Calu3 (cell line): ENCODE measurements at regions of chr2 and their contacts with region 1.

Region 1: DNA sequence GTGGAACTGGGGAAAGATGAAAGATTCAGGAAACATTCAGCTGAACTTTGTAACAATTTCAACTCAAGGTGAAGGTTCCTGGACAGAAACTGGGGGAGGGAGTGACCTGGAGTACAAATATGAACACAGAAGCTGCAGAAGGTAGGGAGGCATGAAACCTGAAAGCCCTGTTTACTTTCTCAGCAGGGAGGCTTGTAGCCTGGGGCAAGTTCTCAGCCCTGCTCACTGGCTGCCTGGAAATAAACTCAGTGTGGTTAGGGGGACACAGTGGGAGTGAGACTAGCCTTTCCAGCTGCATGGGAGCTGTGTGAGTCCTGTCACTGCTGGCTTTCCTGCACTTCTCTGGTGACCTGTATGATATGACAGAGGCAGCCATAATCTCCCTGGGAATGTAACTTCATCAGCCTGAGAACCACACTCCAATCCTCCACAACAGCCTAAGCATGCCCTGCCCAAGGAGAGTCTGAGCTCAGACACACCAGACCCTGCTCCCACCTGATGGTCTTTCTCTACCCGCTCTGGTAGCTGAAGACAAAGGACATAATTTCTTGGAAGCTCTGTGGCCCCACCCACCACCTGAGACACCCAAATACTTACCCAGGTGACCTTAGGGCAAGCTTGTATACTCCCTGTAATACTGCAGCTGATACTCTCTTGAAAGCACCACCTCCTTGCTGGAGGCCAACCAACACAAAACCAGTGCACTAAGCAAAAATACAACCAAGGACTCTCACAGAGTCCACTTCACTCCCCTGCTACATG is 76.9 kb downstream of the ZSWIM2 start:
- DNase-seq: peak; percentile 56
- H3K4me3 Mint-ChIP-seq: peak overlapping the region; percentile 31
- H3K27ac Mint-ChIP-seq: peak overlapping the region; percentile 63
- H3K4me1 Mint-ChIP-seq: peaks cover 33% of the 10 kb centered on the region
- H3K27me3 Mint-ChIP-seq: no peaks in the 10 kb centered on the region
- CTCF ChIP-seq: no peak

Region 2: DNA sequence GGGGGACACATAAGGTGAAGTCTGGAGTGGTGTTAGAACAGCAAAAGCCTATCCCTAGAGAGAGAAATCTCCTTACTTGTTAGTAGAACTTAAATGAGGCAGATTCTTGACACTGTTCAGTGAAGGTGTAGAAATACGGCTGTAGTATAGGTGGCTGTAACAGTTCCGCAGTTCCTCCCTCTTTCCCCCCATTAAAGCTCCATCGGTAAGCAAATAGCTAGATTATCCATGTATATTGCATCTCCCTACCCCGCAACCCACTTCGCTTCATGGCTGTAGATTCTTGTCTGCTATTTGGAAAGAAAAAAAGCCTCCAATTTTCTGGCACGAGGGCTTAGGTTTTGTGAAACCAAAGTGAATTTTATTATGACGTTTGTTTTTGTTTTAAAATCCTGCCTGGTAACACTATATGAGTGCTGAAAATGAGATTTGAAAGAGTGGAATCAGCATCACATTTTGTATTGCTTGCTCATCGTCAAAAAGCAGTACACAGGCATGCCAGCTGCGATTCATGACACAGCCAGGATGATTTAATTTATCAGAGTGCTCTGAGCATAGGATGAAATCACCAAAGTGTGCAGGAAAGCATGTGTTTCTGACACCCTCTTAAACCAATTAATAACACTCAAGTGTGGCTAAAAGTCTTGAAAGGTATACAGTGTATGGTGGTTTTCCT is 76.8 kb before region 1 on chr2:
- CTCF ChIA-PET with region 1: no interaction called
- intact Hi-C with region 1: loop called (anchors 5 kb)
- DNase-seq: no peak
- H3K4me3 Mint-ChIP-seq: peak overlapping the region; percentile 82
- H3K27ac Mint-ChIP-seq: peak overlapping the region; percentile 49
- H3K4me1 Mint-ChIP-seq: peaks cover 36% of the 10 kb centered on the region
- H3K27me3 Mint-ChIP-seq: no peaks in the 10 kb centered on the region
- CTCF ChIP-seq: no peak

Region 3: GRCh38 chr2:186751790-186752189 is 20.2 kb before region 1 on chr2:
- CTCF ChIA-PET with region 1: interaction called, 4 read pairs
- intact Hi-C with region 1: loop called (anchors 1 kb)
- DNase-seq: no peak
- H3K4me3 Mint-ChIP-seq: no peak overlapping the region
- H3K27ac Mint-ChIP-seq: peak overlapping the region; percentile 54
- H3K4me1 Mint-ChIP-seq: peaks cover 38% of the 10 kb centered on the region
- H3K27me3 Mint-ChIP-seq: no peaks in the 10 kb centered on the region
- CTCF ChIP-seq: no peak

Region 4: DNA sequence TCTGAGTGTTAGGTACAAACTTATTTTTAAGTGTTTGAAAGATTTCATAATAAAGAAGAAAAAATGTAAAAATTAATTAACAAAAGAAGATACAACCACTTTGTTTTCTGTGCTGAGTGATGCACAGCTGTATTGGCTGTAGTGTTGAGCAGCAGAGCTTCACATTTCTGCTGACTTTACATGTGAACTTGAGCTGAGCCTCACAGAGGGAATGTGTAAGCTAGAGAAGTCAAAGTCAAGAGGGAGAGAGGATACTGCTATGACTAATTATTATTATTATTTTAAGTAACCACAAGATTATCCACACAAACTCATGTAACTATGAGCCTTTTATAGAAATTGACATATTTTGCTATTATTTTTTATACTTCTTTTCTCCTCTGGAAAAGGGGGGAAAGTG is 236.1 kb after region 1 on chr2:
- CTCF ChIA-PET with region 1: no interaction called
- intact Hi-C with region 1: no loop called
- DNase-seq: no peak
- H3K4me3 Mint-ChIP-seq: no peak overlapping the region
- H3K27ac Mint-ChIP-seq: no peak overlapping the region
- H3K4me1 Mint-ChIP-seq: peaks cover 8% of the 10 kb centered on the region
- H3K27me3 Mint-ChIP-seq: no peaks in the 10 kb centered on the region
- CTCF ChIP-seq: no peak